AG04450 (cell line): ENCODE measurements at regions of chr2 and their contacts with region 1.

Region 1: DNA sequence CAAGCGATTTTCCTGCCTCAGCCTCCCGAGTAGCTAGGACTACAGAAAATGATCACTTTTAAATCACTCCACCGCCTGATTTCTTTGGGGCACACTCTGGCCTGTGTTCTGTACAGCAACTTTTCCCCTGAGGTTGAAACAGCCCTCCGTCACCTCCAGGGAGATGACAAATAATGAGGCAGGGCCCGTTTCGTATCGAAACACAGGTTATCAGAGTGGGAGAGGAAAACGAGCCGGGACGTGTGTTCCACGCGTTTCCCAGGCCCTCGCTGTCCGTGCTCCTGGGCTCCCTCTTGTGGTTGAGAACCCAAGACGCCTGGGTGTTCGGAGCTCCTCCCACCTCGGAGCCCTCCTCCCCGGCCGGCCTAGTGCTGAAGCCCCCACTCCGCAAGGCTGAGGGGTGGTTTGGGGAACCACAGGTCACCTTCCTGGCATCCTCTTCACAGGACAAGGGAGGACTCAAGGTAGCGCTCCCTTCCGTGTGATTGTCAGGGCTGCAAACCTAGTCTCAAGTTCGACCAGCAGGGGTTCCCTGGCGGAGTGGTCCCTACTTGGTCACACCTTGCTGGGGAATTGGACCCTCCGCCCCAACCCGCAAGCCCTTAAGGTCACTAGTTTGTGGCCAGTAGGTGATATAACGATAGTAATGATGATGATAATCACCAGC is 12.8 kb downstream of the ATP6V1B1 start:
- DNase-seq: peak; percentile 33
- H3K4me3 ChIP-seq: peak overlapping the region; percentile 54
- H3K27ac ChIP-seq: no peak overlapping the region
- H3K27me3 ChIP-seq: no peaks in the 10 kb centered on the region
- CTCF ChIP-seq: peak; percentile 93

Region 2: DNA sequence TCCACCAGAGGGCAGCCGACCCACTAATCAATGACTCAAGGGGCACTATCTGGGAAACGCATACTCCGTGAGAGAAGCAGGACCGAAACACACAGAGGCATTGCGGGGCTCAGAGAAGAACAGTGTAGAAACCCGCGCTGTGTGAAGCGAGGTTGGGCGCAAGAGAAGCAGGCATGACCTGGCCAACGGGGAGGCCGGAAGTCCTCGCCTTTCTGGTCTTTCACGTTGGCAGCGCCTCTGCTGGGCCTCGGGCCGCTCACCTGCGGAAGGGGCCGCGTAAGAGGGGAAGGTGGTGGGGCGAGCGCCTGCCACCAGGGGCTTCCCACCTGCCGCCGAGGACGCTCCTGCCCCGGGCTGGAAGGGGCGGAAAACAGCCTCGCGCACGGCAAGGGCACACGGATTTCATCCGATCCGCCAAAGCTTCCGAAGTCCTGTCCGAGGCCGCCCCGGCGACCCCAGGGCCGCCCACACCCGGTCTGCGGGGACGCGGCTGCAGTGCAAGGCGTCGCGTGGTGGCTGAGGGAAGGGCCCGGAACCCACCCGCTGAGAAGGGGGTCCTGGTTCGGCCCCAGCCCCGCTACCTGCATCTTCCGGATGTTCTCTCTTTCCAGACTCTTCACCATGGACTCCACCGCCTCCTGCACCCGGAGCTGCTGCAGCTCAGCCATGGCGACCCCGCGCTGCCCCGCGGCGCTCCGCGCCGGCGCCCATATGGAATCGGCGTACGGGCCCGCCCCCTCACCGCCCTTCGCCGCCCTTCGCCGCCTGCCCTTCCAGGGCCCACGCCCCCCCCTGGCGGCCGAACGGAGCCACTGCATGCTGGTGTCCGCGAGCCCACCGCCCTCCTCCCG is 646.9 kb before region 1 on chr2 and contains the start of gene FAM136A:
- CTCF ChIA-PET with region 1: interaction called, 24 read pairs
- POLR2A ChIA-PET with region 1: no interaction called
- DNase-seq: peak; percentile 11
- H3K4me3 ChIP-seq: peak within 1 kb of the TSS; percentile 83
- H3K27ac ChIP-seq: peak within 1 kb of the TSS; percentile 11
- H3K27me3 ChIP-seq: peaks cover 2% of the 10 kb centered on the region
- CTCF ChIP-seq: peak; percentile 77
- polyA plus RNA-seq, gene FAM136A: 25.8 and 34.1 TPM in 2 replicates

Region 3: GRCh38 chr2:70871398-70872211 is 76.9 kb before region 1 on chr2:
- CTCF ChIA-PET with region 1: interaction called, 205 read pairs
- POLR2A ChIA-PET with region 1: no interaction called
- DNase-seq: peak; percentile 57
- H3K4me3 ChIP-seq: no peak overlapping the region
- H3K27ac ChIP-seq: no peak overlapping the region
- H3K27me3 ChIP-seq: peaks cover 29% of the 10 kb centered on the region
- CTCF ChIP-seq: peak; percentile 84

Region 4: DNA sequence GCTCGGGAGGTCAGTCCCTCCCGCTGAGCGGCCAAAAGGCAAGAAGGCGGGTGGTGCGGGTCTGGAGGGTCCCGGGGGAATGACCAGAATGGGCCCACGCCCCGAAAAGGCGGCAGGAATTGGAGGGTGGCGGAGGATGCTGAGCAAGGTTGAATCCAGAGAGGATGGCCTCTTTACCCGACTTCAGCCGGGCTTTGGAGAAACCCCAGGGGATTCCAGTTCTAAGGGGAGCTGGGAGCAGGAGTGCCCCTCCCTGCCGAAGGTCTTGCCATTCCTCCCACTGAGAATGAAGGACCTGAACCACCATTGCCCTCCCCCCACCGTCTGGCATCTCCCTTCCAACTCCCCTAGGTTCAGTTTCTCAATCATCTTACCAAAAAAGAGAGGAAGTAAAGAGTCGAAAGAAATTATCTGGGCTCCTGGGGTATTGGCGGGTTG is 51.7 kb before region 1 on chr2:
- CTCF ChIA-PET with region 1: interaction called, 15 read pairs
- POLR2A ChIA-PET with region 1: no interaction called
- DNase-seq: no peak
- H3K4me3 ChIP-seq: no peak overlapping the region
- H3K27ac ChIP-seq: no peak overlapping the region
- H3K27me3 ChIP-seq: peaks cover 80% of the 10 kb centered on the region
- CTCF ChIP-seq: no peak

Region 5: DNA sequence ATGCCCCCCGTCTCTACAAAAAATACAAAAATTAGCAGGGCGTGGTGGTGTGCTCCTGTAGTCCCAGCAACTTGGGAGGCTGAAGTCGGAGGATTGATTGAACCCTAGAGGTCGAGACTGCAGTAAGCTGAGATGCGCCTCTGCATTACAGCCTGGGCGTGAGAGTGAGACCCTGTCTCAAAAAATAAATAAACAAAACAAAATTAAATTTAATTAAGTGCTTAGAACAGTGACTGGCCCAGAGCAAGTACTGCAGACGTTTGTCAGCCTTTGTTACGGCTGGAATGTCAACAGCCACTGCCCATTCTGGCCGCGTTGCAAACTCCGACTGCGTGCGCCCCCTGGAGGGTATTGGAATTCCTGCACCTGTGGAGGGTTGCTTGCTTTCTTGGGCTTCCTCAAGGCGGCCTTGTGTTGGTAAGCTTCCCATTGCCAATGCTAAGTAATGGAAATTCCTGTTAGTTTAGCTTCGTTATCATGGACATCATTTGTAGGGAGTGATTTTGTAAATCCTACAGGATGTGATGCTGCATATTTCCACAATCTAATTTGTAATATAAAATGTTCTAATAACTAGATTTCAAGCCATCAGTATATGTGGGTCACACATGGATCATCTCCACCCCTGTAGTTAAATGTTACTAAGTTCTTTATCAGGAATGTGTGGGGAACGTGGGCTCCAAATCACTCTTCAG is 28.7 kb before region 1 on chr2:
- CTCF ChIA-PET with region 1: interaction called, 43 read pairs
- POLR2A ChIA-PET with region 1: no interaction called
- DNase-seq: peak; percentile 44
- H3K4me3 ChIP-seq: no peak overlapping the region
- H3K27ac ChIP-seq: no peak overlapping the region
- H3K27me3 ChIP-seq: no peaks in the 10 kb centered on the region
- CTCF ChIP-seq: peak; percentile 91

Region 6: DNA sequence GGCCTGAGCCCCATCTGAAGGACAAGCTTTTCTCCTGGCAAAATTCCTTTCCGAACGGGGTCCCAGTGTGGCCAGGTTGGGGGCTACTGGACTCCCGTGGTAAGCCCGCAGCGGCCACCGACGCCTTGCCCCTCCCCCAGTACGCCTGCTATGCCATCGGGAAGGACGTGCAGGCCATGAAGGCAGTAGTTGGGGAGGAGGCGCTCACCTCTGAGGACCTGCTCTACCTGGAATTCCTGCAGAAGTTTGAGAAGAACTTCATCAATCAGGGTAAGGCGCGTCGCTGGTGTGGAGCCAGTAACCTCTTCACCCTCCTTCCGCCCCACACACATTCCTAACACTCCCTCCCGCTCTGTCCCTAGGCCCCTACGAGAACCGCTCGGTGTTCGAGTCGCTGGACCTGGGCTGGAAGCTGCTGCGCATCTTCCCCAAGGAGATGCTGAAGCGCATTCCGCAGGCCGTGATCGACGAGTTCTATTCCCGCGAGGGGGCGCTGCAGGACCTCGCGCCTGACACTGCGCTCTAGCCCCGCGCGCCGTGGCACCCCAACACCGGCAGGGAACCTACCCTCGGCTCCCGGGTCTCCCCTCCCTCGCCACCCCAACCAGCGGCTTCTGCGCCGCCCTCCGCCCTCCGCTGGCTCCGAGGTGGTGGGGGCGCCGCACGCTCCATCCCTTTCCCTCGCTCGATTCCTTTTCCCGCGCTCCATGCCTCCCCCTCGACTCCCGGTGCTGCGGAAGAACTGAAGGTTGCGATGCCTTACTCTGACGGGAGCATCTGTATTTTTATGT is 16.3 kb after region 1 on chr2:
- CTCF ChIA-PET with region 1: interaction called, 46 read pairs
- POLR2A ChIA-PET with region 1: interaction called, 5 read pairs
- DNase-seq: peak; percentile 29
- H3K4me3 ChIP-seq: peak overlapping the region; percentile 60
- H3K27ac ChIP-seq: no peak overlapping the region
- H3K27me3 ChIP-seq: peaks cover 9% of the 10 kb centered on the region
- CTCF ChIP-seq: peak; percentile 78